GM12878 (cell line): ENCODE measurements at regions of chr2 and their contacts with region 1.

Region 1: DNA sequence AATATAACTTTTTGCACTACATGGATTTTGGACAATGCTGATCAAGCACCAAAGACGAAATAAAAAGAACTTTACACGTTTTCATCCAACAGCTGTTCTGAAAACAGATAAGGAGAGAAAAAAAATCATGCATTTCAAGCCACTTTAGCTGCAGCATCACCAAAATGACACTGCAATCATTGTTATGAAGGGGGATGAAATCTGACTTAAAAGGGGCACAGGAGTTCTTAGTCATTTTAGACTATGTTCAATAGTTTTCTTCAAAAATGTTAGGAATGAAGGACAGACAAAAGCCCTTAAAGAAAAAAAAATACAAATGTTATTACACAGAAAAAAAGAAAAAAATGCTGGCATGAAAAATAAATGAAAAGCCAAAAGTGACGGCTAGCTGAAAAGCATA is 71.2 kb downstream of the CUL3 start:
- DNase-seq: no peak
- ATAC-seq: no peak
- H3K4me3 ChIP-seq: no peak overlapping the region
- H3K27ac ChIP-seq: no peak overlapping the region
- H3K4me1 ChIP-seq: peaks cover 12% of the 10 kb centered on the region
- H3K27me3 ChIP-seq: no peaks in the 10 kb centered on the region
- CTCF ChIP-seq: no peak
- EP300 ChIP-seq: no peak
- POLR2A ChIP-seq: no peak
- RAD21 ChIP-seq: no peak

Region 2: GRCh38 chr2:224086226-224086914 is 427.6 kb before region 1 on chr2:
- CTCF ChIA-PET with region 1: no interaction called
- POLR2A ChIA-PET with region 1: no interaction called
- RAD21 ChIA-PET with region 1: no interaction called
- SMC1A ChIA-PET with region 1: no interaction called
- in situ Hi-C with region 1: no loop called
- intact Hi-C with region 1: no loop called
- DNase-seq: no peak
- ATAC-seq: no peak
- H3K4me3 ChIP-seq: no peak overlapping the region
- H3K27ac ChIP-seq: no peak overlapping the region
- H3K4me1 ChIP-seq: no peaks in the 10 kb centered on the region
- H3K27me3 ChIP-seq: no peaks in the 10 kb centered on the region; a peak in 2 of 4 replicates
- CTCF ChIP-seq: no peak
- EP300 ChIP-seq: no peak
- POLR2A ChIP-seq: no peak
- RAD21 ChIP-seq: no peak

Region 3: DNA sequence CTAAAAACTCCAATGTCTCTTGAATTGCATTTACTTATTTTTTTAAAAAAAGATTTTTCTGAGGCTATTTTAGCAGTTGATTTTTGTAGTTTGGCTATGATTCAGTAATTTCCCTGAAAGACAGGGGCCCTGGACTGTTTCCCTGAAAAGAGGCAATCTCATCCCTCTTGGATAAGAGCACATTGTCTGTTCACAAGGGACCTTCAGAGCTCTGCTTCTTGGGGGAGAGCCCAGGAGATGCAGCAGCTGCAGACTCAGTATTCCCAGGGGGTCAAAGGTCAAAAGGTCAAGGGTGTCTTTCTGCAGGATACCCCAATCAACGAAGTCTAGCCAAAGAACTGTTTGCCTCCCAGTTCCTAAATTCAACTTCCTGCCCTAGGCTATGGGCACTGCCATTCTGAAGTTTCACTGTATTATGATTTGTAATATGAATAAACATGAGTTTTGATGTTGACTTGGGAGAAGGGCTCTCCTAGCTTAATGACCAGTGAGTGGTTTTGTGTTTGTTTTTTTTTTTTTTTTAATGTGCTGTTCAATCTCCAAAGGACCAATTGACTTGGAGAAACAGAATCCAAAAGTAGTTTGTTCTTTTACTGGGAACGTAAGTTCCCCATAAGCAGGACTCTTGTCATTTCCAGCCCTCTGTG is 317.9 kb before region 1 on chr2:
- CTCF ChIA-PET with region 1: no interaction called
- POLR2A ChIA-PET with region 1: no interaction called
- RAD21 ChIA-PET with region 1: no interaction called
- SMC1A ChIA-PET with region 1: no interaction called
- in situ Hi-C with region 1: no loop called
- intact Hi-C with region 1: no loop called
- DNase-seq: no peak
- ATAC-seq: no peak
- H3K4me3 ChIP-seq: no peak overlapping the region
- H3K27ac ChIP-seq: no peak overlapping the region
- H3K4me1 ChIP-seq: no peaks in the 10 kb centered on the region
- H3K27me3 ChIP-seq: no peaks in the 10 kb centered on the region
- CTCF ChIP-seq: no peak
- EP300 ChIP-seq: no peak
- POLR2A ChIP-seq: no peak
- RAD21 ChIP-seq: no peak

Region 4: GRCh38 chr2:224492531-224492930 is 21.5 kb before region 1 on chr2:
- CTCF ChIA-PET with region 1: interaction called, 5 read pairs
- POLR2A ChIA-PET with region 1: no interaction called
- RAD21 ChIA-PET with region 1: no interaction called
- SMC1A ChIA-PET with region 1: interaction called, 5 read pairs
- in situ Hi-C with region 1: no loop called
- intact Hi-C with region 1: loop called (anchors 2 kb)
- DNase-seq: no peak
- ATAC-seq: no peak
- H3K4me3 ChIP-seq: no peak overlapping the region
- H3K27ac ChIP-seq: no peak overlapping the region
- H3K4me1 ChIP-seq: no peaks in the 10 kb centered on the region
- H3K27me3 ChIP-seq: no peaks in the 10 kb centered on the region
- CTCF ChIP-seq: no peak
- EP300 ChIP-seq: no peak
- POLR2A ChIP-seq: no peak
- RAD21 ChIP-seq: no peak

Region 5: GRCh38 chr2:224694502-224694901 is 180.5 kb after region 1 on chr2:
- CTCF ChIA-PET with region 1: no interaction called
- POLR2A ChIA-PET with region 1: no interaction called
- RAD21 ChIA-PET with region 1: no interaction called
- SMC1A ChIA-PET with region 1: no interaction called
- in situ Hi-C with region 1: no loop called
- intact Hi-C with region 1: no loop called
- DNase-seq: no peak
- ATAC-seq: no peak
- H3K4me3 ChIP-seq: no peak overlapping the region
- H3K27ac ChIP-seq: no peak overlapping the region
- H3K4me1 ChIP-seq: no peaks in the 10 kb centered on the region
- H3K27me3 ChIP-seq: no peaks in the 10 kb centered on the region
- CTCF ChIP-seq: no peak
- EP300 ChIP-seq: no peak
- POLR2A ChIP-seq: no peak
- RAD21 ChIP-seq: no peak